CD4-positive, alpha-beta memory T cell (primary cell): ENCODE measurements at regions of chr6 and their contacts with region 1.

Region 1: DNA sequence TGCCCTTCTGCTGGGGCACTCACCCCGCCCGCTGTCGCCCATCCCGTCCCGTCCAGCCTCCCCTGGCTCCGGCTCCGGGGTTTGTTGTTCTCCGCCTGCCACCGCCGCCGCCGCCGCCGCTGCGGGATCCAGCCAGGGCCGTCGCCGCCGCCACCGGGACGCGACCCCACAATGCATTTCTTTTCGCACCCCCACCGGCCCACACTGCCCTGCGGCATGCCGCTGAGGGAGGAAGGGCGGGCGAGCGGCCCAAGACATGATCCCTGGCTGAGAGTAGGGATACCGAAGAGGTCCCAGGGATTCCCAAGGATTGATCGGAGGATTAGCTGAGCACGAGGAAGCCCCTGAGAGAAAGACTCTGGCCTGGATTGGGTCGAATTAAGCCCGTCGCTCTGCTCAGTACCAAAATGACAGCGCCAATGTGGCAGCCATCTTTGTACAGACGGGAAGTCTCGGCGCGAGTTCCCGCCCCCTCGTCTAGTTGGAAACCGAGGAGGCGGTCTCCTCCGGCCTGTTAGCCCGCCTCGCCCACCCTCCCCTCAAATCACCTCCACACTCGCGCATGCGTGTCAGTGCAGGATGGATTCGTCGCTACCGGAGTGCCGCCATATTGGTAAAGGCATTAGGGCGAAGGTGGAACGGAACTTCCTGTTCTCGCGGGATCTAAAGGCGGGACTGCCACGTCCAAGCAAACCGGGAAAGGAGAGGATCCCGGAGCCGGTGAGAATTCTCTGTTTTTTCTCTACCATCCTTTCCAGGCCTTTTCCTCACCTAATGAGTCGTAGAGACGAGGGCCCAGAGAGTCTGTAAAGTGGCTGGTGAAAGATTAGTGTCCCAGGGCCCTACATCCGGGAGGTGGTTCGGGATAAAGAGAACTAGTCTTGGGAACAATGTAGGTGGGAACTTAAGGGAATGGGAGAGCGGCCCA is at the starts of genes RXRB and SLC39A7:
- DNase-seq: peak; percentile 95 to 99 (median 98)
- H3K4me3 ChIP-seq: peak within 1 kb of the TSS; percentile 99
- H3K4me3 Mint-ChIP-seq: peak within 1 kb of the TSS; percentile 98 to 100 (median 99)
- H3K27ac ChIP-seq: peak within 1 kb of the TSS; percentile 88
- H3K27ac Mint-ChIP-seq: peak within 1 kb of the TSS; percentile 96 to 99 (median 98)
- H3K4me1 ChIP-seq: peaks cover 62% of the 10 kb centered on the region
- H3K4me1 Mint-ChIP-seq: peaks cover 45 to 82% (median 64%) of the 10 kb centered on the region in 4 donors
- H3K27me3 ChIP-seq: no peaks in the 10 kb centered on the region
- H3K27me3 Mint-ChIP-seq: no peaks in the 10 kb centered on the region
- total RNA-seq, gene RXRB: 89.2 to 94.3 TPM
- total RNA-seq, gene SLC39A7: 40.8 to 40.9 TPM

Region 2: DNA sequence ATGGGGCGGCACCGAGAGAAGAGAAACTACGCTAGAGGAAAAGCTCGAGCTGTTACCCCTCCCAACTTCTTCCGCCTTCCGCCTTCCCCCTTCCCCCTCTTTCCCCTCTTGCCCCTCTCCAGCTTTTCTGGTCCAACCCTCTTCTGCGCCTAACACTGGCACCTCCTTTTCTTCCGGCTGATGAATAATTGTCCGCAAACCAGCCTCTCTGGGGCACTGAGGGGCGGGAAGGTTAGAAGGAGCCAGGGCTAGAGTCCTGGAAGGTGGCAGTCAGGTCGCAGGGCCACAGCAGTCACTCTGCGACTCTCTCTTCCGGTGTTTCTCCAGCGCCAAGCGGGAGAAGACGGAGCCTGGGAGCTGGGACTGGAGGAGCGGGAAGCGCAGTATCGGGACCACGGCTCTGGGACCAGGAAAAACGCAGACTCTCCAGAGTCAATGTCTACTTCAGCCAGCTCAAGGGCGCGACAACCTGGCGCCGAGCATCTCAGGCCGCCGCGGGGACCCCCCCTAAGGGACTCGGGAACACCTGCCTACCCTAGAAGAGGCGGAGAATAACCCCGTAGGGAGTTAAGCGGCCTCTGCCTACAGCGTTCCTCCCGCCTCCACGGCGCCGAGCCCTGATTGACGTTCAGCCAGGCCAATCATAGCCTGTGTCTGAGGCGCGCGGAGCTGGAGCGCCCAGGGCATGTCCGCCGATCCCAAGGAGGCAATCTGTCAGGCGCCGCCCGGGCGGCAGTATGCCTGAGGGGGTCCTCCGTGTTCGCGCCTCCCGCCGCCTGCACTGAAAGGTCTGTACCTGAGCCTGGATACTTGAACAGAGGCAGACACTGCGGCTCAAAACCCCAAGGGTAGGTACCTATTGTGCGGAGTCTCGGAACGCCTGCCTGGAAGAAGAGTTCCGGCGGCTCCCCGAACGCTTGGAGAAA is 306.1 kb before region 1 on chr6:
- CTCF ChIA-PET with region 1: no interaction called
- POLR2A ChIA-PET with region 1: no interaction called
- intact Hi-C with region 1: loop called (anchors 10 kb)
- DNase-seq: peak; percentile 91 to 97 (median 91)
- H3K4me3 ChIP-seq: peak overlapping the region; percentile 78 to 90
- H3K4me3 Mint-ChIP-seq: peak overlapping the region; percentile 99 to 100 (median 100)
- H3K27ac ChIP-seq: peak overlapping the region; percentile 84
- H3K27ac Mint-ChIP-seq: peak overlapping the region; percentile 93 to 99 (median 98)
- H3K4me1 ChIP-seq: peaks cover 21% of the 10 kb centered on the region
- H3K4me1 Mint-ChIP-seq: peaks cover 14 to 45% (median 26%) of the 10 kb centered on the region in 4 donors
- H3K27me3 ChIP-seq: no peaks in the 10 kb centered on the region
- H3K27me3 Mint-ChIP-seq: no peaks in the 10 kb centered on the region

Region 3: DNA sequence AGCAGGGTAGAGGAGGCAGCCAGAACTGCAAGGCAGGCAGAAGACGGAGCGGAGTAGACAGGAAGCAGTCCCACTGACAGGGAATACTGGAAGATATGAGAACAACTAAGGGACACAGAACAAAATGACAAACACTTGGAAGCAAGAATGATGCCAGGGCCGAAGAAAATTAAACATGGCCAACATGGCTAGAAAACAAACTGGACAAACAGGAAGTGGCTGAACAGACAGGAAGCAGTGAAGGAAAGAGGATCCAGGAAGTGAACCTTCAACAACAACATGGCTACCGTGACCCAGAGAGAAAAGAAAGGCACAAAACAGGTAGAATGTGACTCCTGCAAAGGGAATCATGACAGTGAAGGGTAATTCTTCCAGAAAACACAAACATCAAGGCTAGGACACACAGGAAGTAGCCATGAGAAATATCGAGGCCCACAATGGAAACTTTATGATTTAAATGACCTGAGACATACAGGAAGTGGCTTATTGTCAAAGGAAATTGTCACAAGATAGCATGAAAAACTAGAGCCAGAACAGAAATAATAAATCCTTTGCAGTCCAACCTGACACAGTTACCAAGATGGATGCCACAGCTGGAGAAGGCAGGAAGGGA is 17.3 kb before region 1 on chr6:
- CTCF ChIA-PET with region 1: interaction called, 3 read pairs
- POLR2A ChIA-PET with region 1: interaction called, 11 read pairs
- intact Hi-C with region 1: loop called (anchors 1 kb)
- DNase-seq: peak in 1 of 5 donors; percentile 12
- H3K4me3 ChIP-seq: peak overlapping the region in 1 of 2 donors; percentile 3
- H3K4me3 Mint-ChIP-seq: peak overlapping the region; percentile 42 to 85 (median 54)
- H3K27ac ChIP-seq: no peak overlapping the region
- H3K27ac Mint-ChIP-seq: peak overlapping the region; percentile 56 to 91 (median 83)
- H3K4me1 ChIP-seq: peaks cover 20% of the 10 kb centered on the region
- H3K4me1 Mint-ChIP-seq: peaks cover 17 to 28% (median 21%) of the 10 kb centered on the region in 4 donors
- H3K27me3 ChIP-seq: peaks cover 1% of the 10 kb centered on the region
- H3K27me3 Mint-ChIP-seq: peaks cover 7 to 10% of the 10 kb centered on the region in 2 donors

Region 4: GRCh38 chr6:33317669-33318425 is 117.4 kb after region 1 on chr6 and contains the start of gene ZBTB22:
- CTCF ChIA-PET with region 1: no interaction called
- POLR2A ChIA-PET with region 1: no interaction called
- intact Hi-C with region 1: loop called (anchors 1 kb)
- DNase-seq: peak; percentile 96 to 99 (median 97)
- H3K4me3 ChIP-seq: peak within 1 kb of the TSS; percentile 73 to 100
- H3K4me3 Mint-ChIP-seq: peak within 1 kb of the TSS; percentile 98 to 100 (median 99)
- H3K27ac ChIP-seq: peak within 1 kb of the TSS; percentile 83
- H3K27ac Mint-ChIP-seq: peak within 1 kb of the TSS; percentile 98 to 99 (median 98)
- H3K4me1 ChIP-seq: peaks cover 73% of the 10 kb centered on the region
- H3K4me1 Mint-ChIP-seq: peaks cover 40 to 100% (median 62%) of the 10 kb centered on the region in 4 donors
- H3K27me3 ChIP-seq: no peaks in the 10 kb centered on the region
- H3K27me3 Mint-ChIP-seq: no peaks in the 10 kb centered on the region
- total RNA-seq, gene ZBTB22: 28.6 to 28.7 TPM

Region 5: GRCh38 chr6:33417903-33418689 is 217.6 kb after region 1 on chr6 and contains the start of gene CUTA:
- CTCF ChIA-PET with region 1: interaction called, 4 read pairs
- POLR2A ChIA-PET with region 1: no interaction called
- intact Hi-C with region 1: loop called (anchors 5 kb)
- DNase-seq: peak; percentile 97 to 100 (median 100)
- H3K4me3 ChIP-seq: peak within 1 kb of the TSS; percentile 82 to 94
- H3K4me3 Mint-ChIP-seq: peak within 1 kb of the TSS; percentile 87 to 97 (median 94)
- H3K27ac ChIP-seq: peak within 1 kb of the TSS; percentile 97
- H3K27ac Mint-ChIP-seq: peak within 1 kb of the TSS; percentile 99 to 100 (median 99)
- H3K4me1 ChIP-seq: peaks cover 72% of the 10 kb centered on the region
- H3K4me1 Mint-ChIP-seq: peaks cover 43 to 87% (median 61%) of the 10 kb centered on the region in 4 donors
- H3K27me3 ChIP-seq: no peaks in the 10 kb centered on the region
- H3K27me3 Mint-ChIP-seq: no peaks in the 10 kb centered on the region
- total RNA-seq, gene CUTA: 210 to 217 TPM